Head of caudate nucleus (tissue), 42 donors: ENCODE measurements at regions of chr1 and their contacts with region 1.

Region 1: DNA sequence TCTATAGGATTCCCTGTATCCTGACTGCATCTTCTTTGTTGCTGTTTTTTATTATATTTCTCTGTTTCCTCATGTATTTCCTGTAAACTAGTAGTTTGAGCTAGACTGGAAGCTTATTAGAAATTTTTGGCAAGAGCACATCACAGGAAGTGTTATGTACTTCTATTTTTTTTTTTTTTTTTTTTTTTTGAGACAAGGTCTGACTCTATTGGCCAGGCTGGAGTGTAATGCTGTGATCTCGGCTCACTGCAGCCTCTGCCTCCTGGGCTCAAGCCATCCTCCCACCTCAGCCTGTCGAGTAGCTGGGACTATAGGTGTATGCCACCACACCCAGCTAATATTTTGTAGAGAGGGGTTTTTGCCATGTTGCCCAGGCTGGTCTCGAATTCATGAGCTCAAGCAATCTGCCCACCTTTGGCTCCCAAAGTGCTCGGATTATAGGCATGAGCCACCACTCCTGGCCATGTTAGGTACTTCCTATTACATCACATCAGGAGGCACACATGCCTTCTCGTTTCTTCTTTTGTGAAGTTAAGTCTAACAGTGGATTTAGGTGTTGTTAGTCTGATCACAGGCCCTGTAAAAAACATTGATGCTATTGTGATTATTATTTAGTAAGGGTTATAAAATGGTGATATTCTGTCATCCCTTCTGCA is 12.5 kb downstream of the C1orf21 start:
- DNase-seq: no peak

Region 2: DNA sequence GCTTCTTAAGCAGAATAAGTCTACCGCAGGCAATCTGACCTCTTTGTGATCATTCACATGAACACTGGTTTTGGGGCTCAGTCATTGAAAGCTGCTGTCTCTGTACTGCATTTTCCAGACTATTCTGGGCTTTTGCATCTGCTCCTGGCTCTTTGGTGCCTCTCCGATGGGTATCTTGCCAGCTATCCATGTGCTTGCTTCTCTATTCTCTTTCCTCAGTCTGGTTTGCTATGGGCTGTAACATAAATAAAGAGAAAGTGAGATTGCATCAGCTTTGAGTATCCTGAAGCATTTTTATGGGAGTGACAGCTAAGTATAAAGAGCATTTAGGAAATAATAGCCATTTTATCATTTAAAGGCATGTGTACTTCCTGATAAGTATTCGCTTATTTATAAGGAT is 58.2 kb after region 1 on chr1:
- intact Hi-C with region 1: loop called (anchors 10 kb)
- DNase-seq: no peak